ENCODE measurements at regions of chr17 and their contacts with region 1.

Region 1: GRCh38 chr17:18217412-18218015 is 7.9 kb upstream of the LLGL1 start:
- DNase-seq: peak; percentile 89

Region 2: DNA sequence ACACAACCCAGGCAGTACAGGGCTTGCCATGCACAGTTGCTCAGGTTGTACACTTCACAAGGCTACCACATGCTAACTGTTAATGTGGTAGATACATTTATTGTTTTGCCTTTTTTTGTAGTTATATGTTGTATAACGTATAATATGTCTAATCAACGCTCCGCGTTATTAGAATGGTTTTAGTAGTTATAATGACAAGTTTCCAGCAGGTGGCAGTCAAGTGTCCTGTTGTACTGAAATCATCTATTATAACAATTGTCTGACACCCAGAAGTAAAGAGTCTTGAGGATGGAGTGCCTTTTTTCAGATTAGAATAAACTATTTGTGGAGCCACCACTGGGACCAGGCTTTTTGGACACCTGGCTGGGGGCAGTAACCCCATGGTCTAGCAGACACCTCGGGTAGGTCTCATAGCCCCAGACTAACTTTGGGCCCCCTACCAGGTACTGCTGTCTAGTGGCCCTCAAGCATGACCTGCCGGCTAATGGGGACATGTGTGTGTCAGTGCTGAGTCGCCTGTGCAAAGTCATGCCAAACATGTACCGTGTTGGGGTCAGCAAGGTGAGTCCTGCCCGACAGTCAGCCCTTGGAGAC is 76.2 kb before region 1 on chr17:
- intact Hi-C with region 1: loop called (anchors 2 to 10 kb)
- DNase-seq: no peak

Region 3: GRCh38 chr17:18233803-18234518 is 16.4 kb after region 1 on chr17:
- intact Hi-C with region 1: loop called in 1 of 2 experiments (anchors 1 kb)
- DNase-seq: no peak

Measured in posterior vena cava (tissue), 2 donors.